ENCODE measurements at regions of chr1 and their contacts with region 1.

Region 1: GRCh38 chr1:223748773-223749733 is 36.7 kb downstream of the CAPN2 start:
- DNase-seq: peak; percentile 78
- ATAC-seq: peak; percentile 70
- H3K4me3 Mint-ChIP-seq: peak overlapping the region; percentile 53
- H3K27ac Mint-ChIP-seq: no peak overlapping the region
- H3K4me1 Mint-ChIP-seq: peaks cover 14% of the 10 kb centered on the region
- H3K27me3 Mint-ChIP-seq: no peaks in the 10 kb centered on the region

Region 2: GRCh38 chr1:223695941-223696340 is 53.1 kb before region 1 on chr1:
- CTCF ChIA-PET with region 1: interaction called, 95 read pairs
- POLR2A ChIA-PET with region 1: no interaction called
- intact Hi-C with region 1: loop called (anchors 1 kb)
- DNase-seq: no peak
- ATAC-seq: no peak
- H3K4me3 Mint-ChIP-seq: no peak overlapping the region
- H3K27ac Mint-ChIP-seq: no peak overlapping the region
- H3K4me1 Mint-ChIP-seq: peaks cover 9% of the 10 kb centered on the region
- H3K27me3 Mint-ChIP-seq: peaks cover 4% of the 10 kb centered on the region

Region 3: DNA sequence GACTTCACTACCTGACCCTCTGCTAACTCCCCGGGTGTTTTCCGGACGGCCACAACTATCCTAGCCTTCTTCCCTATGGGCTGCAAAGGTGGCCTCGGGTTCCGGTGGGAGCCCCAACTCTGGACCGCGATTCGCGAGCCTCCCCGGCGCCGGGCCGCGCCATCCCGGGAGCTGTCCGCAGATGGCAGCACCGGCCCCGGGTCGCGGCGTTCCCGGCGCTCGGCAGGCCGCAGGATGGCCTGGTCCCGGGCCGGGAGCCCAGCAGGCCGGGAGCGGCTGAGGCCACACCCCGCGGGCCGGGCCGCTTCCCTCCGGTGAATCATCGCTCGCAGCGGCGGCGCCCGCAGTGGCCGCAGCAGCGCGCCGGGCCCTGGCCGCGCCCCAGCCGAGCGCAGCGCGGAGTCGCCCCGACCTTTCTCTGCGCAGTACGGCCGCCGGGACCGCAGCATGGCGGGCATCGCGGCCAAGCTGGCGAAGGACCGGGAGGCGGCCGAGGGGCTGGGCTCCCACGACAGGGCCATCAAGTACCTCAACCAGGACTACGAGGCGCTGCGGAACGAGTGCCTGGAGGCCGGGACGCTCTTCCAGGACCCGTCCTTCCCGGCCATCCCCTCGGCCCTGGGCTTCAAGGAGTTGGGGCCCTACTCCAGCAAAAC is 36.7 kb before region 1 on chr1 and contains the start of gene CAPN2:
- CTCF ChIA-PET with region 1: interaction called, 22 read pairs
- POLR2A ChIA-PET with region 1: no interaction called
- intact Hi-C with region 1: loop called (anchors 1 to 5 kb)
- DNase-seq: peak; percentile 76
- ATAC-seq: peak; percentile 47
- H3K4me3 Mint-ChIP-seq: peak within 1 kb of the TSS; percentile 80
- H3K27ac Mint-ChIP-seq: peak within 1 kb of the TSS; percentile 82
- H3K4me1 Mint-ChIP-seq: peaks cover 62% of the 10 kb centered on the region
- H3K27me3 Mint-ChIP-seq: no peaks in the 10 kb centered on the region
- total RNA-seq, gene CAPN2: 31.1 to 33.1 TPM

Region 4: GRCh38 chr1:223759273-223759672 is 10.2 kb after region 1 on chr1:
- CTCF ChIA-PET with region 1: interaction called, 17 read pairs
- POLR2A ChIA-PET with region 1: no interaction called
- intact Hi-C with region 1: no loop called
- DNase-seq: no peak
- ATAC-seq: no peak
- H3K4me3 Mint-ChIP-seq: no peak overlapping the region
- H3K27ac Mint-ChIP-seq: no peak overlapping the region
- H3K4me1 Mint-ChIP-seq: no peaks in the 10 kb centered on the region
- H3K27me3 Mint-ChIP-seq: no peaks in the 10 kb centered on the region